Mammary epithelial cell (primary cell): ENCODE measurements at regions of chr4 and their contacts with region 1.

Region 1: DNA sequence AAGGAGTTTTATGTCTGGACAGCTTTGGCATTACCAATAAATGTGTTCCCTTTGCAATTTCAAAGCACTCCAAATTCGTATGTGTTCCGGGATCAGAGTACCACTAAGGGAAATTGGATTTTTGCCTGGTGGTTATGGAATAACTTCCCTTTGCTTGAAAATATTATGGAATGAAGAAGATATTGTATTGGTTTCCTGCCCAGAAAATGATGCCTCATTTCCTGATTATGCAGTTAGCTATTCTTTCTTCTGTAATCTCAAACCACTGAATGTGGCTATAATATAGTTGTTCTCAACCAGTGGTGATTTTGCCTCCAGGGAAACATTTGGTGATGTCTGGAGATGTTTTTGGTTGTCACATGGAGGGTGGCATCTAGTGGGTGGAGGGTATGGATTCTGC is 142.9 kb downstream of the PCDH7 start:
- DNase-seq: peak; percentile 16
- H3K4me3 ChIP-seq: no peak overlapping the region
- H3K27ac ChIP-seq: no peak overlapping the region
- H3K4me1 ChIP-seq: peaks cover 29% of the 10 kb centered on the region
- H3K27me3 ChIP-seq: no peaks in the 10 kb centered on the region
- CTCF ChIP-seq: no peak

Region 2: GRCh38 chr4:30386266-30386895 is 476.6 kb before region 1 on chr4:
- CTCF ChIA-PET with region 1: no interaction called
- dilution Hi-C with region 1: no loop called
- in situ Hi-C with region 1: no loop called
- intact Hi-C with region 1: no loop called
- DNase-seq: peak; percentile 19
- H3K4me3 ChIP-seq: no peak overlapping the region
- H3K27ac ChIP-seq: no peak overlapping the region
- H3K4me1 ChIP-seq: no peaks in the 10 kb centered on the region
- H3K27me3 ChIP-seq: no peaks in the 10 kb centered on the region
- CTCF ChIP-seq: no peak

Region 3: DNA sequence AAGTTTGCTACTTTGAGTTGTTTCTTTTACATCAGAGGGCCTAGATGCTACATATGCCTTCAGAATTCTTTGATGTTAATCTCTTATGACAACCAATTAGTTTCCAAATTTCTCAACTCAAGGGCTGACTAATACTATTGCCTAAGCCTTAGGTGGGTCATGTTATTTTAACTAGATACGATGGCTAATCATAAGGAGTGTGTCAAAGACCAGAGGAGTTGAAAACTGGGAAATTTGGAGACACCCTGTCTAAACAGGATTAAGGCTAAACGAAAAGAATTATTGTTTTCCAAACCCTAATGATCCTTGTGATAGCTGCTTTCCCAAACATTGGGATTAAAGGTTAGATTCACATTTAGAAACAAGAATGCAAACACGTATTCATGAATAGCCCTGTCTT is 85.6 kb after region 1 on chr4:
- CTCF ChIA-PET with region 1: no interaction called
- dilution Hi-C with region 1: no loop called
- in situ Hi-C with region 1: no loop called
- intact Hi-C with region 1: loop called (anchors 2 kb)
- DNase-seq: peak; percentile 91
- H3K4me3 ChIP-seq: no peak overlapping the region
- H3K27ac ChIP-seq: peak overlapping the region; percentile 74
- H3K4me1 ChIP-seq: peaks cover 39% of the 10 kb centered on the region
- H3K27me3 ChIP-seq: no peaks in the 10 kb centered on the region
- CTCF ChIP-seq: no peak

Region 4: DNA sequence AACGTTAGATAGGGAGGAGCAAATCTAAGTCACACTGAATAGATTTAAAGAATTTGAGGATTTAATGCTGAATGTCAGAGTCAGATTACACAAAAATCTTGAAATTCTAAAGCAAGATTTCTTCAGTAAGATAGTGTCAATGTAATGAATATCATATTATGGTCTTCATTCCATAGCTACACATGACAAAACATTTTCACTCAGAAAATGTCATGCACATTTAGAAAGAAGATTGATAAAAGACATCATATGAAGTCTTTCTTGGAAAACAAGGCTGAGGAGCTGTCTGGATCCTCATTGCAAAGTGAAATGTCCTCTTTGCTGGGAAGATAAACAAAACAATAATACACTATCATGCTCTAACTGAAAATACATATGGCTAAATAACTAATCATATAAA is 864.0 kb after region 1 on chr4:
- CTCF ChIA-PET with region 1: no interaction called
- dilution Hi-C with region 1: no loop called
- in situ Hi-C with region 1: no loop called
- intact Hi-C with region 1: no loop called
- DNase-seq: no peak
- H3K4me3 ChIP-seq: no peak overlapping the region
- H3K27ac ChIP-seq: no peak overlapping the region
- H3K4me1 ChIP-seq: no peaks in the 10 kb centered on the region
- H3K27me3 ChIP-seq: no peaks in the 10 kb centered on the region
- CTCF ChIP-seq: no peak